A549 (cell line): ENCODE measurements at regions of chr1 and their contacts with region 1.

Region 1: GRCh38 chr1:112501810-112502641 is 6.7 kb upstream of the WNT2B start:
- DNase-seq: peak; percentile 25 to 57
- ATAC-seq: peak; percentile 82 to 86
- H3K4me3 ChIP-seq: peak overlapping the region; percentile 58
- H3K27ac ChIP-seq: peak overlapping the region; percentile 77 to 87
- H3K4me1 ChIP-seq: peaks cover 4% of the 10 kb centered on the region; the same call in 2 of the 3 replicates
- CTCF ChIP-seq: peak; percentile 51
- EP300 ChIP-seq: no peak
- POLR2A ChIP-seq: no peak
- RAD21 ChIP-seq: peak; percentile 56 to 69

Region 2: DNA sequence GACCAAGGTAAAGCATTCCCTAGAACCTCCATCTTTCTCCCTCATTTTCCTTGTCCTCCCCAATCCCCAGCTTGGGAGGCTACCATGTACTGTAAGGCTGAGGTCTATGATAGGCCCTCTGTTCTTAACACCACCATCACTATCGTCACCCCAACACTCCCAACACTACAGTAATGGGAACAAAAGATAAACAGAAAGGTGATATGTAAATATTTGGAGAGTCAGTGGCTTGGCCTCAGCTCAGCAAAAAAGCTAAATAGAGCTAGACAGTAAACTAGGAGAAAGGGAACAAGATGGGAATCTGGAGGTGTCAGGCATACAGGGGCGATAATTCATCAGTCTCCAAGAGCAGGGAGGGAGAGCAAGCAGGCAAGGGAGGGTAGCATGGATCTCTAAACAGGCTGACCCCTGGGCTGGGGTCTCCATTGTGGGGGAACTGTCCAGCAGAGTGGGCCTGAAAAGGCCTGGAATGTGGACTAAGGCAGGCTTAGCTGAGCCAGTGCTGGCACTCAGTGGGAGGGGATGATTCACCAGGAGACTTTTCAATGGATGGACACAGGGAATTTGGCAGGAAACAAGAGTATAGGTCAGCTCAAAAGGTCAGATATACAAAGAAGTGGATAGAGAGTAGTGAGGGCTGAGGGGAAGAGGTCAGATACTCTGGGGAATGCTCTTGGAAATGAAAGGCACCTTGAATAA is 13.4 kb after region 1 on chr1:
- CTCF ChIA-PET with region 1: interaction called, 36 read pairs
- POLR2A ChIA-PET with region 1: no interaction called
- DNase-seq: no peak
- ATAC-seq: peak; percentile 52 to 70; a peak in 3 of 6 replicates
- H3K4me3 ChIP-seq: no peak overlapping the region
- H3K27ac ChIP-seq: no peak overlapping the region
- H3K4me1 ChIP-seq: peaks cover 7% of the 10 kb centered on the region; the same call in 1 of the 3 replicates
- CTCF ChIP-seq: no peak
- EP300 ChIP-seq: no peak
- POLR2A ChIP-seq: no peak
- RAD21 ChIP-seq: no peak

Region 3: DNA sequence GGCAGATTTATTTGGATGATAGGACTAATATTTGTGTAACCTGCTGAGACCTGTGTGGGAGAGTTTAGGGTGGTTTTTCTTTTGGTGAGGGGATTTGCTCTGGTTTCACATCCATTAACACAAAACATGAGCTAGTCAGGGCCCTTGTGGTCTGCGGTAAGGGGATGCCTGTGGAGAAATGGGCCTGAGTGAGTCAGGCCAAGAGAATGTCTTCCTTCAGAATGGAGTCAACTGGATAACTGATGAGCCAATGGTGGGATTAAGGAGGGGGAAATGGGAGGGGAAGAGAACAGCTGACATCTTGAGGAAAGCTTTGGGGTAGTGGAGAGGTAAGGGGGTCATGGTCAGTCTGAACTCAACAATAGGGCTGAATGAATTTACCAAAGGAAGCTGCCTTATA is 20.6 kb after region 1 on chr1:
- CTCF ChIA-PET with region 1: interaction called, 18 read pairs
- POLR2A ChIA-PET with region 1: no interaction called
- DNase-seq: no peak
- ATAC-seq: no peak
- H3K4me3 ChIP-seq: no peak overlapping the region
- H3K27ac ChIP-seq: no peak overlapping the region
- H3K4me1 ChIP-seq: no peaks in the 10 kb centered on the region
- CTCF ChIP-seq: no peak
- EP300 ChIP-seq: no peak
- POLR2A ChIP-seq: no peak
- RAD21 ChIP-seq: no peak

Region 4: DNA sequence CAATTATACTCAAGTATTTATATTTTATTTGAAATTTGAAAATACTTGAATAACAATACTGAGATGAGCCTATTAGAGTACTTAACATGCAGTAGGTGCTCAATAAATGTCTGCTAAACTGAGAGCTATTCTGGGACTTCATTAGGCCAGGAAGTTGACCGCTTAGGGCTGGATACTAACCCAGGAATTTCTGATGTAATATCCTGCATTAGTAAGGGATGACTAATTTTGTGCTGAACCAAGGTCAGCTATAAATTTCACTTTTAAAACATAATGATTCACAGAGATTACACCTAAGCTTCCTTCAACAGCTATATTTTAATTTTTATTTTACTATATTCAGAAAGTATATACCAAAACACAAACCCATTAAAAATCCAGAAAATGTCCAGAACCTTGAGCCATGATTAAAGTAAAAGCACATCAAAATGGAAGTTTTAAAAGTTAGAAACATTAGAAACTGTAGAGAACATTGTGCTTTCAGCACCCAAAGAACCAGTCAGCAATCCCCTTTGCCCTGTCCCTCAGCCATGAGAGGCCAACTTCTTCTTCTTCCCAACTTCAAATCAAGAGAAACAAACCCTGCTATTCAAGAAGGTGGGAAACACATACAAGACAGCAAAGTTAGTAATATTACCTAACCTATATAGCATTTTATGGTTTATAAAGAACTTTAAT is 42.1 kb after region 1 on chr1:
- CTCF ChIA-PET with region 1: interaction called, 10 read pairs
- POLR2A ChIA-PET with region 1: no interaction called
- DNase-seq: peak; percentile 25 to 76
- ATAC-seq: peak; percentile 83 to 91; a peak in 5 of 6 replicates
- H3K4me3 ChIP-seq: no peak overlapping the region
- H3K27ac ChIP-seq: peak overlapping the region; percentile 82 to 87
- H3K4me1 ChIP-seq: peaks cover 29% of the 10 kb centered on the region
- CTCF ChIP-seq: no peak
- EP300 ChIP-seq: no peak
- POLR2A ChIP-seq: no peak
- RAD21 ChIP-seq: no peak

Region 5: DNA sequence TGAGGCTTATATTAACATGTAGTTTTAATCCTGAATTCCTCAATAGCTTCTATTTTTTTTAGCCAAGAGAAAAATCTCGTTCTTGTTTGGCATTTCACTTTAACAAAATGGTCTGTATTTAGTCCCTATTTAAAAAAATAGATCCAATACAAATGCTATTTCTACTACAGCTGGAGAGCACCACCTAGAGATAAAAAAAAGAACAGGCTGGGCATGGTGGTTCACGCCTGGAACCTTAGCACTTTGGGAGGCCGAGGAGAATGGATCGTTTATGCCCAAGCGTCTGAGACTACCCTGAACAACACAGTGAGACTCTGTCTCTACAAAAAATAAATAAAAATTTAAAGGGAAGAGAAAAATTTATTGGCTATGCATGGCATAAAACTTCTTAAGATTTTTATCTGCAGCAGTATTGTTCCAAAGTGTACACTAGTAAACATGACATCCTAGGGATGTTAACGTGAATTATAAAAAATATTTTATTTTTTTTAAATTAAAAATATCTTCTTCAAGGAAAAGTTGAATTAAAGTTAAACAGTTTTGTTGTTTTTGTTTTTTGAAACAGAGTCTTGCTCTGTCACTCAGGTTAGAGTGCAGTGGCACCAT is 112.5 kb after region 1 on chr1:
- CTCF ChIA-PET with region 1: interaction called, 31 read pairs
- POLR2A ChIA-PET with region 1: interaction called, 4 read pairs
- DNase-seq: peak in 1 of 2 experiments; percentile 48
- ATAC-seq: peak in 1 of 2 experiments; percentile 41; a peak in 2 of 6 replicates
- H3K4me3 ChIP-seq: no peak overlapping the region
- H3K27ac ChIP-seq: no peak overlapping the region
- H3K4me1 ChIP-seq: peaks cover 8% of the 10 kb centered on the region; the same call in 2 of the 3 replicates
- CTCF ChIP-seq: peak; percentile 55
- EP300 ChIP-seq: no peak
- POLR2A ChIP-seq: no peak
- RAD21 ChIP-seq: peak; percentile 63 to 64

Region 6: GRCh38 chr1:112674439-112674985 is 172.5 kb after region 1 on chr1 and contains the start of gene MOV10:
- CTCF ChIA-PET with region 1: interaction called, 10 read pairs
- POLR2A ChIA-PET with region 1: interaction called, 3 read pairs
- DNase-seq: peak; percentile 35 to 69
- ATAC-seq: peak; percentile 74 to 85
- H3K4me3 ChIP-seq: peak within 1 kb of the TSS; percentile 92
- H3K27ac ChIP-seq: peak within 1 kb of the TSS; percentile 94 to 97
- H3K4me1 ChIP-seq: peaks cover 11% of the 10 kb centered on the region; the same call in 2 of the 3 replicates
- CTCF ChIP-seq: no peak
- EP300 ChIP-seq: no peak
- POLR2A ChIP-seq: 0 out of 2 replicates have a peak, but pooled peaks have one; percentile 23
- RAD21 ChIP-seq: no peak
- polyA plus RNA-seq, gene MOV10: 27.3 and 28.3 TPM in 2 replicates

Region 7: GRCh38 chr1:112706908-112707663 is 205.1 kb after region 1 on chr1 and contains the start of gene RHOC:
- CTCF ChIA-PET with region 1: interaction called, 15 read pairs
- POLR2A ChIA-PET with region 1: no interaction called
- DNase-seq: peak; percentile 82 to 86
- ATAC-seq: peak; percentile 75 to 77
- H3K4me3 ChIP-seq: peak within 1 kb of the TSS; percentile 99
- H3K27ac ChIP-seq: peak within 1 kb of the TSS; percentile 98 to 100
- H3K4me1 ChIP-seq: peaks cover 34% of the 10 kb centered on the region
- CTCF ChIP-seq: peak; percentile 79
- EP300 ChIP-seq: no peak
- POLR2A ChIP-seq: peak; percentile 62
- RAD21 ChIP-seq: peak; percentile 71 to 86
- polyA plus RNA-seq, gene RHOC: 255 and 321 TPM in 2 replicates